ENCODE measurements at regions of chr5 and their contacts with region 1.

Region 1: GRCh38 chr5:112742424-112742823 is 4.7 kb downstream of the APC start:
- DNase-seq: no peak
- ATAC-seq: no peak

Region 2: GRCh38 chr5:112707187-112708102 is 35.0 kb before region 1 on chr5:
- intact Hi-C with region 1: loop called (anchors 5 kb)
- DNase-seq: peak; percentile 98
- ATAC-seq: peak; percentile 97

Measured in Right ventricle myocardium inferior (tissue), 1 donor.